ENCODE measurements at regions of chr1 and their contacts with region 1.

Region 1: DNA sequence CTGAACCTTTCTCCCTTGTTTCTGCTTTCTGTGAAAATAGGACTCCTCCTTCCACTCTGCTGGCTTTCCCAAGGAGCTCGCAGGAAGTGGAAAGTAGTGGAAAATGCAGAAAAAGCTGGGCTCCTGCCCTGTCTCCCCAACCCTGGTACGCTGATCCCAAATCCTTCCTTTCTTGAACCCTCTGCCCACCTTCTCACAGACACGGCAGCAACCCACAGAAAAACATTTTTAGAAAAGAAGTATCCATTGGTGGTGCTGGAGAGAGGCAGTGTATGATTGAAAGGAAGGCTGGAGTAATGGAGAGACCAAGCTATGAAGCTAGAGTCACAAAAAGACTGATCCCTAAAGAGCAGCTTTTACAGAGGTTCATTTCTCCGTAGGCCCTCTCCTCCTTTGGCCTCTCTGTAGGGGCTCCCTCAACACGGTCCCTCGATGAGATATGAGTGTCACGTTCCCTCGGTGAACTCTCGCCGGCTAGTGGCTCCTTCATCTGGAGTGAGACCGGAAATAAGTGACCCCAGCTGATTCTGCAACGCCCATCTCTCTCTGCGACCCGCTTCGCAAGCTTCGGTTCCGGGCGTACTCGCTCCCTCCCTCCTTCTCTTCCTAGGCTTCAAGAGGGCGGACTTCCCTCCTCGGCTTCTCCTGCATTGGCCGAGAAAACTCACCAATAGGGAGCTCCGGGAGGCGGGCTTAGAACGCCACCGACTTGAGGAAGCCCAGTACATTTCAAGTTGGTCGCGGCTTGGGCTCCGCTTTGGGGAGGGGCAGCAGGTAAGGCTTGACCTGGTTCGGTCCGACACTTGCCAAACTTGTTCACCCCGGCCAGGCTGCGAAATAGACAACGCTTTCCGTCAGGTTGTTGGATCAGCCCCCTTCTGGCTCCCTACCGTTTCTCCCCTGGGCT is at the starts of genes ANKRD34A and POLR3GL:
- DNase-seq: no peak
- ATAC-seq: peak; percentile 89
- H3K4me3 ChIP-seq: peak within 1 kb of the TSS; percentile 52 to 92
- H3K27ac ChIP-seq: peak within 1 kb of the TSS; percentile 93
- H3K4me1 ChIP-seq: peaks cover 24% of the 10 kb centered on the region
- H3K27me3 ChIP-seq: no peaks in the 10 kb centered on the region
- CTCF ChIP-seq: no peak
- total RNA-seq, gene ANKRD34A: 1.4 TPM
- total RNA-seq, gene POLR3GL: 14.9 TPM

Region 2: GRCh38 chr1:145706086-145706680 is 258.1 kb before region 1 on chr1:
- CTCF ChIA-PET with region 1: no interaction called
- POLR2A ChIA-PET with region 1: no interaction called
- in situ Hi-C with region 1: no loop called
- intact Hi-C with region 1: no loop called
- DNase-seq: no peak
- ATAC-seq: no peak
- H3K4me3 ChIP-seq: no peak overlapping the region
- H3K27ac ChIP-seq: no peak overlapping the region; the same call in 1 of the 2 replicates
- H3K4me1 ChIP-seq: peaks cover 15% of the 10 kb centered on the region
- H3K27me3 ChIP-seq: no peaks in the 10 kb centered on the region
- CTCF ChIP-seq: no peak

Region 3: GRCh38 chr1:145891587-145892485 is 72.4 kb before region 1 on chr1:
- CTCF ChIA-PET with region 1: interaction called, 5 read pairs
- POLR2A ChIA-PET with region 1: no interaction called
- in situ Hi-C with region 1: no loop called
- intact Hi-C with region 1: loop called (anchors 5 kb)
- DNase-seq: peak; percentile 97
- ATAC-seq: peak; percentile 97
- H3K4me3 ChIP-seq: peak overlapping the region; percentile 5 to 17; a peak in 3 of 4 replicates
- H3K27ac ChIP-seq: peak overlapping the region; percentile 89
- H3K4me1 ChIP-seq: peaks cover 25% of the 10 kb centered on the region
- H3K27me3 ChIP-seq: no peaks in the 10 kb centered on the region
- CTCF ChIP-seq: peak; percentile 99

Region 4: GRCh38 chr1:145908653-145909052 is 55.6 kb before region 1 on chr1:
- CTCF ChIA-PET with region 1: interaction called, 3 read pairs
- POLR2A ChIA-PET with region 1: interaction called, 10 read pairs
- in situ Hi-C with region 1: no loop called
- intact Hi-C with region 1: no loop called
- DNase-seq: no peak
- ATAC-seq: no peak
- H3K4me3 ChIP-seq: no peak overlapping the region
- H3K27ac ChIP-seq: peak overlapping the region; percentile 46
- H3K4me1 ChIP-seq: peaks cover 13% of the 10 kb centered on the region
- H3K27me3 ChIP-seq: no peaks in the 10 kb centered on the region
- CTCF ChIP-seq: no peak

Region 5: GRCh38 chr1:145927063-145927886 is 37.0 kb before region 1 on chr1 and contains the start of gene RBM8A:
- CTCF ChIA-PET with region 1: no interaction called
- POLR2A ChIA-PET with region 1: interaction called, 16 read pairs
- in situ Hi-C with region 1: no loop called
- intact Hi-C with region 1: no loop called
- DNase-seq: peak; percentile 98
- ATAC-seq: peak; percentile 99
- H3K4me3 ChIP-seq: peak within 1 kb of the TSS; percentile 74 to 99
- H3K27ac ChIP-seq: peak within 1 kb of the TSS; percentile 100
- H3K4me1 ChIP-seq: peaks cover 18% of the 10 kb centered on the region
- H3K27me3 ChIP-seq: no peaks in the 10 kb centered on the region
- CTCF ChIP-seq: peak; percentile 80
- total RNA-seq, gene RBM8A: 172 TPM

Region 6: GRCh38 chr1:145978854-145979759 is 14.9 kb after region 1 on chr1:
- CTCF ChIA-PET with region 1: interaction called, 10 read pairs
- POLR2A ChIA-PET with region 1: no interaction called
- in situ Hi-C with region 1: no loop called
- intact Hi-C with region 1: no loop called
- DNase-seq: no peak
- ATAC-seq: no peak
- H3K4me3 ChIP-seq: no peak overlapping the region
- H3K27ac ChIP-seq: no peak overlapping the region
- H3K4me1 ChIP-seq: 0 out of 2 replicates have a peak, but pooled peaks cover 4% of the 10 kb centered on the region
- H3K27me3 ChIP-seq: no peaks in the 10 kb centered on the region
- CTCF ChIP-seq: peak; percentile 26

Region 7: DNA sequence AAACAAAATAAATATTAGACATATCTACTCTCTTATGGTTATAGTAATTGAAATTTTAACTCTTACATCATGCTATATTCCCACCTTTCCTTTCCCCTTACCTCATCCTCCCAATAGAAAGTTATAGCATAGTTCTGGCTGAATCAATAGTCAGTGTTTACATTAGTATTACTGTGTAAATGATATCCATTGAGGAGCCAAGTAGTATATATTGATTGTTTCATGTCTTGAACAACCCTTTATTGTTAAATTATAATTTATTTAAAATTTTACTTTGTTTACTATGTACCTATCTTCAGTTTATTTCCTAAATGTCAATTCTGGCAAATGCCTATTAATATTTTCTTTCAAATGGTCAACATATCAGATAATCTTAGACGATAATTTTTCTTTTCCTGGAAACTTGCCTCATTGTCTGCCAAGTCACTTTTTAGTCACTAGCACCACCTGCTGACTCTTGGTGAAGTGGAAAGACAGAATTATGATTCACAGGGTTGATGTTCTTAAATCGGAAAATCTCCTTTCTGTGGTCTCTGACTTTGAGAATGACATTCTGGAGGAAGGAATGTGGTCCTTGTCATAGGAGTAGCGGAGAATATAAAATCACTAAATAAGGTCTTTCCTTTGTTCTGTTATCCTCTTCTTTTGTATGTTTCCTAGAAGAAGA is 48.6 kb after region 1 on chr1:
- CTCF ChIA-PET with region 1: interaction called, 15 read pairs
- POLR2A ChIA-PET with region 1: no interaction called
- in situ Hi-C with region 1: no loop called
- intact Hi-C with region 1: no loop called
- DNase-seq: peak; percentile 74
- ATAC-seq: peak; percentile 74; the same call in 1 of the 2 replicates
- H3K4me3 ChIP-seq: no peak overlapping the region
- H3K27ac ChIP-seq: no peak overlapping the region
- H3K4me1 ChIP-seq: no peaks in the 10 kb centered on the region
- H3K27me3 ChIP-seq: peaks cover 2% of the 10 kb centered on the region; the same call in 1 of the 2 replicates
- CTCF ChIP-seq: peak; percentile 78; the same call in 1 of the 2 replicates